ENCODE measurements at regions of chr1 and their contacts with region 1.

Region 1: GRCh38 chr1:236142253-236143103 is at the start of gene GPR137B:
- DNase-seq: peak; percentile 49 to 94 (median 81)

Region 2: DNA sequence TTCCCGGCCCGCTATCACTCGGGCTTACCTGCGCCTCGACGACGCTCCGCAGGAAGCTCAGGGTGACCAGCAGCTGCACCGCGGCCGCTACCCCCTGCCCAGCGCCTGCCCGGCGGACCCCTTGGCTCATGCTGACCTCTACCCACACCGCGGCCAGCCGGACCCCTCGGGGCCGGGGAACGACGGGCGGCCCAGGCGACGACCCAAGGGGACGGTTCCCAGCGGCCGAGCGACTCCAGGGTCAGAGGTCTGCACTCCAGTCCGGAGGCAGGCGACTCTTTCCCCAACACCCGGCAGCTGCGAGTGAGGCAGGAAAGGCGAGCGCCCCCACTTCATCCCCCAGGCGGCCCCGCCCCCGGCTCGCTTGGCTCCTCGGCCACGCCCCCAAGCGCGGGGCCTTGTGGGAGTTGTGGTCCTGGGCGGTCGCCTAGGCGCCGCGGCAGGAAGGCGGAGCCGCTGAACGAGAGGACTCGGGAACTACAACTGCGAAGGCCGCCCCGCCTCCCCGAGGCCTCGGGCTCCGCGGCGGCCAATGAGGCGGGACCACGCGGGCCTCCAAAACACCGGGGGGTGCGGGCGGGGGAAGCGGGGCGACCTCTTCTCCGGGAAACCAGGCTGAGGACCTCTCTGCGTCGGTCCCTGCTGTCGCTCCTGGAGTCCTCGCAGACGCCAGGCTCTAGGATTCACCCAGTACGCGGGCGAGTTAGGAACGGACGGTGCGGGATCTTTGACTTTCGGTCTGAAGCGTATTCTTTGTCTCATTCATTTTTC is 139.4 kb after region 1 on chr1 and contains the start of gene ERO1B:
- intact Hi-C with region 1: loop called (anchors 5 kb)
- DNase-seq: peak; percentile 93 to 100 (median 99)

Measured in head of caudate nucleus (tissue), 42 donors.